Naive thymus-derived CD4-positive, alpha-beta T cell (primary cell): ENCODE measurements at regions of chr20 and their contacts with region 1.

Region 1: DNA sequence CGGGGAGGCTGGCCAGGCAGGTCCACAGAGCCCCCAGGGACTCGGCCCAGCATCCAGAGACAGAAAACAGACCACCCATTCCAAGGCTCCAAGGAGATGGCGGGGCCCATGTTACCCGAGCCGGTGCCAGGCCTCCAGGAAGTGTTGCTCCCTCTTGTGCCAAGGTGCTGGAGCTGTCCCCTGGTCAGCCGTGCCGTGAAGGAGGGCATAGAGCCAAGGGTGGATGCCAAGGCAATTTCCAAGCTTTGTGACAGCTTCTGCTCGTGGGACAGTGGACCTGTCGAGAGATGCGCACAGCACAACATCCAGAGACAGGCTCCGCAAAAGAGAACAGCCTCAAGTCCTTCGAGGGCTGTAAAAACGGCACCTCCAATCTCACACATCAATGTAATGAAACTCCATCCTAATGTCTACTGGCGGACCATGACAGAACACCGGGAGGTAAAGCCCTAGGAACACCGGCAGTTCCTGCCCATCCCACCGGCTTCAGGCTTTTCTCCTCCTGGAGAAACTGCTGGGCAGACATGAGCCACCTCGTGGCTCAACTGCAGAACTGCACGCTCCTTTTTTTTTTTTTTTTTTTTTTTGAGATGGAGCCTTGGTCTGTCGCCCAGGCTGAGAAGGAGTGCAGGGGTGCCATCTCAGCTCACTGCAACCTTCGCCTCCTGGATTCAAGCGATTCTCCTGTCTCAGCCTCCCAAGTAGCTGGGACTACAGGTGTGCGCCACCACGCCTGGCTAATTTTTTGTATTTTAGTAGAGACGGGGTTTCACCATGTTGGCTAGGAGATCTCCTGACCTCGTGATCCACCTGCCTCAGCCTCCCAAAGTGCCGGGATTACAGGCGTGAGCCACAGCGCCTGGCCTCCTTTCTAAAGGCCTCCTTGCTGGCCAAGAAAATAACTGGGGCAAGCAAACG is 30.9 kb upstream of the AVP start:
- DNase-seq: peak in 6 of 9 donors; percentile 32 to 55 (median 44)
- ATAC-seq: peak; percentile 68
- H3K4me3 ChIP-seq: no peak overlapping the region
- H3K4me3 Mint-ChIP-seq: peak overlapping the region in 2 of 10 donors; percentile 8 to 16
- H3K27ac ChIP-seq: no peak overlapping the region
- H3K27ac Mint-ChIP-seq: peak overlapping the region in 7 of 9 donors; percentile 31 to 97 (median 77)
- H3K4me1 ChIP-seq: peaks cover 0 to 6% of the 10 kb centered on the region in 2 donors
- H3K4me1 Mint-ChIP-seq: peaks cover 11 to 47% (median 28%) of the 10 kb centered on the region in 7 donors
- H3K27me3 ChIP-seq: no peaks in the 10 kb centered on the region
- H3K27me3 Mint-ChIP-seq: no peaks in the 10 kb centered on the region

Region 2: GRCh38 chr20:3051385-3052019 is 63.9 kb before region 1 on chr20:
- CTCF ChIA-PET with region 1: interaction called, 12 read pairs
- POLR2A ChIA-PET with region 1: interaction called, 5 read pairs
- intact Hi-C with region 1: loop called (anchors 1 kb)
- DNase-seq: no peak
- ATAC-seq: peak; percentile 33
- H3K4me3 ChIP-seq: no peak overlapping the region
- H3K4me3 Mint-ChIP-seq: no peak overlapping the region
- H3K27ac ChIP-seq: no peak overlapping the region
- H3K27ac Mint-ChIP-seq: peak overlapping the region in 2 of 9 donors; percentile 22 to 32
- H3K4me1 ChIP-seq: peaks cover 0 to 5% of the 10 kb centered on the region in 2 donors
- H3K4me1 Mint-ChIP-seq: peaks cover 6 to 16% (median 14%) of the 10 kb centered on the region in 7 donors
- H3K27me3 ChIP-seq: no peaks in the 10 kb centered on the region
- H3K27me3 Mint-ChIP-seq: no peaks in the 10 kb centered on the region

Region 3: GRCh38 chr20:3082306-3082951 is 33.0 kb before region 1 on chr20:
- CTCF ChIA-PET with region 1: interaction called, 3 read pairs
- POLR2A ChIA-PET with region 1: interaction called, 7 read pairs
- intact Hi-C with region 1: loop called in 1 of 2 experiments (anchors 1 kb)
- DNase-seq: peak in 1 of 9 donors; percentile 10
- ATAC-seq: peak; percentile 35
- H3K4me3 ChIP-seq: peak overlapping the region; percentile 24
- H3K4me3 Mint-ChIP-seq: peak overlapping the region; percentile 62 to 83 (median 72)
- H3K27ac ChIP-seq: no peak overlapping the region
- H3K27ac Mint-ChIP-seq: no peak overlapping the region
- H3K4me1 ChIP-seq: peaks cover 0 to 14% of the 10 kb centered on the region in 2 donors
- H3K4me1 Mint-ChIP-seq: peaks cover 11 to 19% (median 17%) of the 10 kb centered on the region in 7 donors
- H3K27me3 ChIP-seq: peaks cover 0 to 13% of the 10 kb centered on the region in 2 donors
- H3K27me3 Mint-ChIP-seq: peaks cover 8 to 62% (median 23%) of the 10 kb centered on the region in 5 donors

Region 4: GRCh38 chr20:3173610-3174441 is 58.4 kb after region 1 on chr20:
- CTCF ChIA-PET with region 1: interaction called, 3 read pairs
- POLR2A ChIA-PET with region 1: no interaction called
- intact Hi-C with region 1: loop called in 1 of 2 experiments (anchors 1 kb)
- DNase-seq: peak in 7 of 9 donors; percentile 81 to 94 (median 92)
- ATAC-seq: peak; percentile 94
- H3K4me3 ChIP-seq: peak overlapping the region; percentile 87
- H3K4me3 Mint-ChIP-seq: peak overlapping the region; percentile 76 to 89 (median 86)
- H3K27ac ChIP-seq: peak overlapping the region; percentile 4
- H3K27ac Mint-ChIP-seq: peak overlapping the region; percentile 3 to 86 (median 51)
- H3K4me1 ChIP-seq: peaks cover 4 to 14% of the 10 kb centered on the region in 2 donors
- H3K4me1 Mint-ChIP-seq: peaks cover 15 to 34% (median 23%) of the 10 kb centered on the region in 7 donors
- H3K27me3 ChIP-seq: peaks cover 0 to 5% of the 10 kb centered on the region in 2 donors
- H3K27me3 Mint-ChIP-seq: peaks cover 0 to 63% (median 16%) of the 10 kb centered on the region in 5 donors

Region 5: GRCh38 chr20:3209257-3209945 is 94.0 kb after region 1 on chr20 and contains the start of gene ITPA:
- CTCF ChIA-PET with region 1: interaction called, 6 read pairs
- POLR2A ChIA-PET with region 1: no interaction called
- intact Hi-C with region 1: loop called (anchors 1 kb)
- DNase-seq: peak; percentile 26 to 67 (median 42)
- ATAC-seq: peak; percentile 44
- H3K4me3 ChIP-seq: peak within 1 kb of the TSS; percentile 94
- H3K4me3 Mint-ChIP-seq: peak within 1 kb of the TSS; percentile 85 to 100 (median 96)
- H3K27ac ChIP-seq: peak within 1 kb of the TSS; percentile 85
- H3K27ac Mint-ChIP-seq: peak within 1 kb of the TSS; percentile 85 to 99 (median 94)
- H3K4me1 ChIP-seq: peaks cover 8 to 14% of the 10 kb centered on the region in 2 donors
- H3K4me1 Mint-ChIP-seq: peaks cover 20 to 38% (median 31%) of the 10 kb centered on the region in 7 donors
- H3K27me3 ChIP-seq: no peaks in the 10 kb centered on the region
- H3K27me3 Mint-ChIP-seq: no peaks in the 10 kb centered on the region
- total RNA-seq, gene ITPA: 37.7 to 71.2 (median 43.5) TPM

Region 6: DNA sequence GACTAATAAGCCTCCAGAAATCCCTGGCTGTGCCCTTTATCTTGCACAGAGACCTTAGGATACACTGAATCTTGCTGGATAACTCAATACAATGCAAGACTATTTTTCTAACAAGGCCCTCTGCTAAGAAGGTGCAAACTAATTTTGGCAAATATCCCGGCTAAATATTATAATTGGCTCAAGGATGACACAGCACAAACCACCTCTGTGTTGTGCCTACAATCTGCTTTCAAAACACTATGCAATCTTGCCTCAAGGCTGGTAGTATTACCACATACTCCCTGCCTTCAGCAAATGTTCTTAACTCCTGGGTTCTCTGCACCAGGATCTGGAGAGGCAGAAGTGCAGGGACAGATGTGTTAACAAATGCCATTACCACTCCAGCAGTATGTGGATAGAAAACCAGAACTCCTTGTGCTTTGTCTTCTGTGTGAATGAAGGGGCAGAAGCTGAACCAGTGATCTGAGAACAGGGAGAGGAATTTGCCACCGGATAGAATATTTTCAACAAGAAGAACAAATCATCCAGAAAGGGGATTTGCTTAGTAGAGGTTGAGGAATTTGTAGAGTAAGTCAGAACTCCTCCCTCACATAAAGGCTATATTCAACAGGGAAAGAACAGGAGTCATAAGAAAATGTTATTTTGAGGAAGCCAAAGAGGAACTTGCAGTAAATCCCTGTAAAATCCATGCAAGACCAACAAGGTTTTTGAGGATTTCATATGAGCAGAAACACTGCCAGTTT is 197.7 kb after region 1 on chr20:
- CTCF ChIA-PET with region 1: interaction called, 27 read pairs
- POLR2A ChIA-PET with region 1: no interaction called
- intact Hi-C with region 1: loop called (anchors 1 to 2 kb)
- DNase-seq: no peak
- ATAC-seq: no peak
- H3K4me3 ChIP-seq: no peak overlapping the region
- H3K4me3 Mint-ChIP-seq: no peak overlapping the region
- H3K27ac ChIP-seq: no peak overlapping the region
- H3K27ac Mint-ChIP-seq: peak overlapping the region in 4 of 9 donors; percentile 20 to 67 (median 39)
- H3K4me1 ChIP-seq: no peaks in the 10 kb centered on the region
- H3K4me1 Mint-ChIP-seq: peaks cover 0 to 4% (median 0%) of the 10 kb centered on the region in 7 donors
- H3K27me3 ChIP-seq: no peaks in the 10 kb centered on the region
- H3K27me3 Mint-ChIP-seq: no peaks in the 10 kb centered on the region